ENCODE measurements at regions of chr7 and their contacts with region 1.

Region 1: DNA sequence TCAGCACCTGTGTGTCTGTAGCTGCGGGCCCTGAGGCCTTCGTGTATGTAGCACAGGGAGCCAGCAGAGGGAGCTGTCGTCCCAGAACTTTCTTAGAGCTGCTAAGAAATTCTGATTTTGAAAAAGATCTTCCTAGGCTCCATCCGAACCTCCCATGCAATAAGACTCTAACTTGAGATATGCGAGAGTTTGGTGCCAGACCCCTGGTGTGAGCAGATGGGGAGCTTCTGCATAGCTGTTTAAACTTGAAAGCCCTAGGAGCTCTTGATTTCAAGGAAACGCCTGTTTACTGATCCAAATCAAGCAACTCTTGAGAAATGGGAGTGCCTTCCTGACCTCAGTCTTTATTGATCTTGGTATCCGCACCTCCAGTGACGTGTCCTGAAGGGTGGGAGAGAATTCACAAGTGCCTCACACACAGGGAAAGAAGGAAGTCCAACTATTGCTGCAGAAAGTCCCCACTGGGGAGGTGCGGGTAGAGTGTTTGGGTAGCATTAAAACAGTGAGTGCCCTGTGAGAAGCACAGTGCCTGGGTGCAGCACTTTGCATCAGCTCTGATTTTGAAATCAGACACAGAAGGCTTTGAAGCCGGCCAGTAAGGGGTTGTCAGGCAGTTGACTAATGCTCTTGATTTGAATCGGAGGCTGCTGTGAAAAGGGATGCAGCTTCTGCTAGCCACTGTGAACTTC is 66.4 kb upstream of the STRIP2 start:
- DNase-seq: peak; percentile 88
- ATAC-seq: peak; percentile 83
- H3K4me3 Mint-ChIP-seq: peak overlapping the region; percentile 70
- H3K27ac Mint-ChIP-seq: peak overlapping the region; percentile 87
- H3K4me1 Mint-ChIP-seq: peaks cover 40% of the 10 kb centered on the region
- H3K27me3 Mint-ChIP-seq: no peaks in the 10 kb centered on the region

Region 2: GRCh38 chr7:129343099-129343700 is 24.6 kb before region 1 on chr7:
- CTCF ChIA-PET with region 1: interaction called, 45 read pairs
- DNase-seq: no peak
- ATAC-seq: no peak
- H3K4me3 Mint-ChIP-seq: no peak overlapping the region
- H3K27ac Mint-ChIP-seq: no peak overlapping the region
- H3K4me1 Mint-ChIP-seq: peaks cover 41% of the 10 kb centered on the region
- H3K27me3 Mint-ChIP-seq: peaks cover 7% of the 10 kb centered on the region

Region 3: GRCh38 chr7:129401967-129402860 is 34.4 kb after region 1 on chr7:
- CTCF ChIA-PET with region 1: interaction called, 15 read pairs
- DNase-seq: peak; percentile 44
- ATAC-seq: peak; percentile 61
- H3K4me3 Mint-ChIP-seq: no peak overlapping the region
- H3K27ac Mint-ChIP-seq: no peak overlapping the region
- H3K4me1 Mint-ChIP-seq: peaks cover 24% of the 10 kb centered on the region
- H3K27me3 Mint-ChIP-seq: no peaks in the 10 kb centered on the region

Region 4: GRCh38 chr7:129468087-129468486 is 100.2 kb after region 1 on chr7:
- CTCF ChIA-PET with region 1: interaction called, 90 read pairs
- DNase-seq: no peak
- ATAC-seq: no peak
- H3K4me3 Mint-ChIP-seq: no peak overlapping the region
- H3K27ac Mint-ChIP-seq: peak overlapping the region; percentile 67
- H3K4me1 Mint-ChIP-seq: peaks cover 15% of the 10 kb centered on the region
- H3K27me3 Mint-ChIP-seq: no peaks in the 10 kb centered on the region

Region 5: GRCh38 chr7:129825496-129826267 is 457.8 kb after region 1 on chr7:
- CTCF ChIA-PET with region 1: interaction called, 31 read pairs
- DNase-seq: peak; percentile 91
- ATAC-seq: peak; percentile 85
- H3K4me3 Mint-ChIP-seq: peak overlapping the region; percentile 87
- H3K27ac Mint-ChIP-seq: peak overlapping the region; percentile 82
- H3K4me1 Mint-ChIP-seq: peaks cover 24% of the 10 kb centered on the region
- H3K27me3 Mint-ChIP-seq: peaks cover 3% of the 10 kb centered on the region